Body of pancreas (tissue), 4 donors: ENCODE measurements at regions of chr5 and their contacts with region 1.

Region 1: GRCh38 chr5:150449517-150450339 is at the start of gene RPS14:
- DNase-seq: peak; percentile 94 to 96 (median 94)
- ATAC-seq: peak; percentile 98
- H3K4me3 ChIP-seq: peak within 1 kb of the TSS; percentile 76 to 88
- H3K27ac ChIP-seq: peak within 1 kb of the TSS; percentile 97 to 99 (median 99)
- H3K4me1 ChIP-seq: peaks cover 22% of the 10 kb centered on the region
- H3K27me3 ChIP-seq: no peaks in the 10 kb centered on the region
- CTCF ChIP-seq: peak; percentile 77 to 99 (median 95)
- POLR2A ChIP-seq: peak; percentile 55 to 87 (median 84)
- total RNA-seq, gene RPS14: 1,348 to 2,916 TPM

Region 2: DNA sequence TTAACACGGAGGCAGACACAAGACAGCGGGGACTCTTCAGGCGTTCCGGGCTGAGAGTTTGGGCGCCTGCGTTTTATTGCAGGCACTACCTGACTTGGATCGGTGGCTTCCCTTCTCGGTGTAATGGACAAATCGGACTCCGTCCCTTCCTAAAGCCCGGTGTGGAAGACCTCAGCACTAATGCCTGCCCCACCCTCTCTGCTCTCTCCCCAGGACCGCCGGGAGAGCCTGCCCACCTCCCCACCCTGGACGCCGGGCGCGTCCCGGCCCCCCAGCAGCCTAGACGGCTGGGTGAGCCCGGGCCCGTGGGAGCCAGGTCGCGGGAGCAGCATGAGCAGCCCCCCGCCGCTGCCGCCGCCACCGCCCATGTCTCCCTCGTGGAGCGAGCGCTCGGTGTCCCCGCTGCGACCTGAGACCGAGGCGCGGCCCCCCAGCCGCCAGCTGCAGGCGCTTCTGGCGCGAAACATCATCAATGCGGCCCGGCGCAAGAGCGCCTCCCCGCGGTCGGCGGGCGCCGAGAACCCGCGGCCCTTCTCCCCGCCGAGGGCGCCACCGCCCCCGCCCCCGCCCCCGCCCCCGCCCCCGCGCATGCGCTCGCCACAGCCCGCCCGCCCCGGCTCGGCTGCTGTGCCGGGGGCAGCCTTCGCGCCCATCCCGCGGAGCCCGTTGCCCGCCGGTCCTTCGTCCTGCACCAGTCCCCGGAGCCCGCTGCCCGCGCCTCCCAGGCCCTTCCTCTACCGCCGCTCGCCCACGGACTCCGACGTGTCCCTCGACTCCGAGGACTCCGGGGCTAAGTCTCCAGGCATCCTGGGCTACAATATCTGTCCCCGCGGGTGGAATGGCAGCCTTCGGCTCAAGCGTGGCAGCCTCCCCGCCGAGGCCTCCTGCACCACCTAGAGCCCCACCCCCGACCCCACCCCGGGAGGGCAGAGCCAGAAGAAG is 206.7 kb after region 1 on chr5:
- intact Hi-C with region 1: loop called (anchors 10 kb)
- DNase-seq: peak; percentile 69 to 83 (median 78)
- ATAC-seq: peak; percentile 82
- H3K4me3 ChIP-seq: peak overlapping the region in 1 of 2 donors; percentile 7
- H3K27ac ChIP-seq: peak overlapping the region in 1 of 4 donors; percentile 41
- H3K4me1 ChIP-seq: peaks cover 12% of the 10 kb centered on the region
- H3K27me3 ChIP-seq: no peaks in the 10 kb centered on the region
- CTCF ChIP-seq: peak; percentile 56 to 91 (median 79)
- POLR2A ChIP-seq: no peak